ENCODE measurements at regions of chr19 and their contacts with region 1.

Region 1: DNA sequence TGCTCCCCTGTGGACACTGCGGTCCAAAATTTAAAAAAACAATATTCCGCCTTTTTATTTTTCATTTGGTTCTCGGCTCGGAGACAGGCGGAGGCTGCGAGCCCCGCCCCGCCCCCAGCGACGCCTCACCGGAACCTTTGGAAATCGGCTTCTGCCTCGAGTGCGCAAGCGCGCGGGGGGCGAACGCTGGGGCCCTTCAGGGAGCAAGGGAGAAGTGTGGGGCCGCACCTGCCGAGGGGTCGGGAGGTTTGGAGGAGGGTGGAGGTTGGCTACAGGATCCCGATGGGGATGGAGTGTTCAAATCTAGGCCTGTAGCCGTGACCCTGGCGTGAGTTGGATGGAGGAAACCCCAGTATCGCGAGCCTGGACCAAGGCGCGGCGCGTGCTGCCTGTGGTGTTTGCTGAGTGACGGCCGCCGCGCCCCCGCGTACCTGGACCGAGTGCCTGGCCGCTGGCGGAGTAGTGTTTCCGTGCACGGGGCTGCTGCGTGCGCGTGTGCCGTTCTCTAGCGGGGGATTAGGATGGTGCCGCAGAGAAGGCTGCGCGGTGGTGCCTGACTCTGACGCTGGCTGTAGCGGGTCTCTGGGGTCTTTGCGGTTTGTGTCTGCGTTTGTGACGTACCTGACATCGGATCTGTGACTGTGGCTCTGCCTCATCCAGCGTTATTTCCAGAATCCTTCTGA is 565 bp upstream of the ZFP30 start:
- DNase-seq: peak; percentile 87
- H3K4me3 Mint-ChIP-seq: peak overlapping the region; percentile 93
- H3K27ac Mint-ChIP-seq: peak overlapping the region; percentile 93
- H3K4me1 Mint-ChIP-seq: peaks cover 29% of the 10 kb centered on the region
- H3K27me3 Mint-ChIP-seq: no peaks in the 10 kb centered on the region

Region 2: GRCh38 chr19:37691881-37692504 is 36.2 kb after region 1 on chr19:
- CTCF ChIA-PET with region 1: no interaction called
- intact Hi-C with region 1: loop called (anchors 1 kb)
- DNase-seq: peak; percentile 85
- H3K4me3 Mint-ChIP-seq: peak overlapping the region; percentile 93
- H3K27ac Mint-ChIP-seq: peak overlapping the region; percentile 82
- H3K4me1 Mint-ChIP-seq: peaks cover 9% of the 10 kb centered on the region
- H3K27me3 Mint-ChIP-seq: no peaks in the 10 kb centered on the region

Region 3: GRCh38 chr19:37706052-37706605 is 50.3 kb after region 1 on chr19:
- CTCF ChIA-PET with region 1: no interaction called
- intact Hi-C with region 1: no loop called
- DNase-seq: no peak
- H3K4me3 Mint-ChIP-seq: no peak overlapping the region
- H3K27ac Mint-ChIP-seq: no peak overlapping the region
- H3K4me1 Mint-ChIP-seq: no peaks in the 10 kb centered on the region
- H3K27me3 Mint-ChIP-seq: no peaks in the 10 kb centered on the region

Region 4: DNA sequence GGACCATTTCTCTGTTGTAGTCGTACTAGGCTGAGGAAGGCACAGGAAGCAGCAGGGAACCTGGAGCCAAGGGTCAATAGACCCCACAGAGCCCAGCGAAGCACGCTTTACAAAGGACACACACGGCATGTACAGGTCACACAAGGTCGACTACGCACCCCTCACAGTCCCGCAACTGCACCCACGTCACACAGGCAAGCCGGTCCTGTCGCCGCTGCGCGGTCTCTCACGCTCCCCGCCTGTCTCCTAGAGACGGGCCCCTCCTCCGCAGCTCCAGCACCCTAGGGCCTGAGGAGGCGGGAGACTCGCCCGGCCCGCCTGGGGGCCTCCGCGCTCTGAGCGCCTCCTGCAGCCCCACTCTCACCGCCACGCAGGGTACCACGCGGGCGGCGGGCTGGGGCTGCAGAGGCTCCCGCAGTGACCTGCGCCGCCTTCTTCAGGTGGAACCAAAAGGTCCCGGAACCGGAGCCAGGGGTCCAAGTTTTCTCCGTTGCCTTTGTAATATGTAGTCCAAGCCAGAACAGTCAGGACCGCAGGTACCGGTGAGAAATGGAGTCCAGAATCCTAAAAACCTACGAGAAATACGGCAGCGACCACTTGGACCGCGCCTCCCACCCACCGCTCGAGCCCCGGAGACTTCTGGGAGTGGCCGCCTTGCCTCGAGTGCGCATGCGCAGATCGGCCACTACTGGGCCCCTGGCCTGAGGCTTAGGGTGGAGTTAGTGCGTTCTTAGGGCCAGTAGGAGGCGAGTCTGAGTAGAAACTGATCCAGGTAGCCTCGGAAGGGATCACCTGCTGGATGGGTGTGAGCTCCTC is 63.5 kb after region 1 on chr19 and contains the start of gene ZNF607:
- CTCF ChIA-PET with region 1: no interaction called
- intact Hi-C with region 1: loop called (anchors 2 kb)
- DNase-seq: peak; percentile 86
- H3K4me3 Mint-ChIP-seq: peak within 1 kb of the TSS; percentile 81
- H3K27ac Mint-ChIP-seq: peak within 1 kb of the TSS; percentile 84
- H3K4me1 Mint-ChIP-seq: peaks cover 13% of the 10 kb centered on the region
- H3K27me3 Mint-ChIP-seq: no peaks in the 10 kb centered on the region
- total RNA-seq, gene ZNF607: 3.4 to 4.1 TPM

Region 5: DNA sequence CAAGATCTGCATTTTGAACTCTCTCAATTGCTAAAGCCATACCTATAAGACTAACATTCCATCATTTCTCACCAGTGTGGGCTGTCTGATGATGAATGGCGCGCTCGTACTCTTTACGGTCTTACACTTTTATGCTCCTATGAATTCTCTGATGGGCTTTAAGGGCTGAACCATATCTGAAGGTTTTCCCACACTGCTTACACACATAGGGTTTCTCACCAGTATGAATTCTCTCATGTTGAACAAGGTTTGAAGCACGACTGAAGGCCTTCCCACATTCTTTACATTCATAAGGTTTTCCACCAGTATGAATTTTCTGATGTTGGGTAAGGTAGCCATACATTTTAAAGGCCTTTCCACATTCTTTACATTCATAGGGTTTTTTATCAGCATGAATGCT is 82.5 kb after region 1 on chr19:
- CTCF ChIA-PET with region 1: no interaction called
- intact Hi-C with region 1: no loop called
- DNase-seq: no peak
- H3K4me3 Mint-ChIP-seq: no peak overlapping the region
- H3K27ac Mint-ChIP-seq: no peak overlapping the region
- H3K4me1 Mint-ChIP-seq: no peaks in the 10 kb centered on the region
- H3K27me3 Mint-ChIP-seq: no peaks in the 10 kb centered on the region

Measured in activated naive CD4-positive, alpha-beta T cell treated with anti-CD3 and anti-CD28 coated beads for 36 hours (primary cell).